Thyroid gland (tissue), 4 donors: ENCODE measurements at regions of chr5 and their contacts with region 1.

Region 1: GRCh38 chr5:170434966-170435605 is 45.9 kb upstream of the KCNMB1 start:
- DNase-seq: peak; percentile 58 to 59
- H3K4me3 ChIP-seq: no peak overlapping the region
- H3K27ac ChIP-seq: no peak overlapping the region
- H3K4me1 ChIP-seq: no peaks in the 10 kb centered on the region
- H3K27me3 ChIP-seq: no peaks in the 10 kb centered on the region
- CTCF ChIP-seq: peak; percentile 67 to 98 (median 88)
- POLR2A ChIP-seq: no peak

Region 2: GRCh38 chr5:170633235-170634081 is 198.4 kb after region 1 on chr5:
- intact Hi-C with region 1: loop called (anchors 2 kb)
- DNase-seq: peak; percentile 61 to 66
- H3K4me3 ChIP-seq: peak overlapping the region in 1 of 3 donors; percentile 5
- H3K27ac ChIP-seq: peak overlapping the region; percentile 51 to 67 (median 65)
- H3K4me1 ChIP-seq: peaks cover 15 to 16% of the 10 kb centered on the region in 2 donors
- H3K27me3 ChIP-seq: no peaks in the 10 kb centered on the region
- CTCF ChIP-seq: peak in 1 of 6 experiments; percentile 42
- POLR2A ChIP-seq: no peak